Activated CD4-positive, alpha-beta T cell treated with anti-CD3 and anti-CD28 coated beads for 36 hours (primary cell): ENCODE measurements at regions of chr5 and their contacts with region 1.

Region 1: GRCh38 chr5:112174959-112175594 is 244.0 kb downstream of the EPB41L4A start:
- DNase-seq: peak; percentile 58
- ATAC-seq: peak; percentile 84
- H3K4me3 Mint-ChIP-seq: no peak overlapping the region
- H3K27ac Mint-ChIP-seq: no peak overlapping the region
- H3K4me1 Mint-ChIP-seq: peaks cover 1% of the 10 kb centered on the region
- H3K27me3 Mint-ChIP-seq: peaks cover 6% of the 10 kb centered on the region

Region 2: GRCh38 chr5:112419986-112420864 is 245.1 kb after region 1 on chr5:
- CTCF ChIA-PET with region 1: interaction called, 14 read pairs
- POLR2A ChIA-PET with region 1: no interaction called
- intact Hi-C with region 1: loop called (anchors 1 kb)
- DNase-seq: peak; percentile 71
- ATAC-seq: peak; percentile 68
- H3K4me3 Mint-ChIP-seq: peak overlapping the region; percentile 63
- H3K27ac Mint-ChIP-seq: no peak overlapping the region
- H3K4me1 Mint-ChIP-seq: peaks cover 10% of the 10 kb centered on the region
- H3K27me3 Mint-ChIP-seq: peaks cover 45% of the 10 kb centered on the region

Region 3: GRCh38 chr5:112492291-112492690 is 317.2 kb after region 1 on chr5:
- CTCF ChIA-PET with region 1: interaction called, 3 read pairs
- POLR2A ChIA-PET with region 1: no interaction called
- intact Hi-C with region 1: loop called (anchors 5 kb)
- DNase-seq: peak; percentile 59
- ATAC-seq: peak; percentile 88
- H3K4me3 Mint-ChIP-seq: no peak overlapping the region
- H3K27ac Mint-ChIP-seq: no peak overlapping the region
- H3K4me1 Mint-ChIP-seq: no peaks in the 10 kb centered on the region
- H3K27me3 Mint-ChIP-seq: peaks cover 33% of the 10 kb centered on the region

Region 4: DNA sequence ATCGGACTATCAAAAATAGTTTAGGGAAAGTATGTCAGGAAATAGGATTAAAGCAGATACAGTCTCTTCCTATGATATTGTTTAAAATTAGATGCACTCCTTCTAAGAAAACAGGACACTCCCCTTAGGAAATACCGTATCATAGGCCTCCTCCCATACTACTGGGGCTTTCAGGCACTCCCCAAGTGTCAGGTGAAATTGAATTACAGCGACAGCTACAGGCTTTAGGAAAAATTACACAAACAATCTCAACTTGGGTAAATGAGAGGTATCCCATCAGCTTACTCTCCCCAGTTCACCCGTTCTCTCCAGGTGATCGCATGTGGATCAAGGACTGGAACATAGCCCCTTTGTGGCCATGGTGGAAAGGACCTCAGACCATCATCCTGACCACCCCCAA is 354.4 kb after region 1 on chr5:
- CTCF ChIA-PET with region 1: no interaction called
- POLR2A ChIA-PET with region 1: no interaction called
- intact Hi-C with region 1: loop called in 1 of 2 experiments (anchors 1 kb)
- DNase-seq: no peak
- ATAC-seq: no peak
- H3K4me3 Mint-ChIP-seq: no peak overlapping the region
- H3K27ac Mint-ChIP-seq: no peak overlapping the region
- H3K4me1 Mint-ChIP-seq: no peaks in the 10 kb centered on the region
- H3K27me3 Mint-ChIP-seq: peaks cover 7% of the 10 kb centered on the region

Region 5: DNA sequence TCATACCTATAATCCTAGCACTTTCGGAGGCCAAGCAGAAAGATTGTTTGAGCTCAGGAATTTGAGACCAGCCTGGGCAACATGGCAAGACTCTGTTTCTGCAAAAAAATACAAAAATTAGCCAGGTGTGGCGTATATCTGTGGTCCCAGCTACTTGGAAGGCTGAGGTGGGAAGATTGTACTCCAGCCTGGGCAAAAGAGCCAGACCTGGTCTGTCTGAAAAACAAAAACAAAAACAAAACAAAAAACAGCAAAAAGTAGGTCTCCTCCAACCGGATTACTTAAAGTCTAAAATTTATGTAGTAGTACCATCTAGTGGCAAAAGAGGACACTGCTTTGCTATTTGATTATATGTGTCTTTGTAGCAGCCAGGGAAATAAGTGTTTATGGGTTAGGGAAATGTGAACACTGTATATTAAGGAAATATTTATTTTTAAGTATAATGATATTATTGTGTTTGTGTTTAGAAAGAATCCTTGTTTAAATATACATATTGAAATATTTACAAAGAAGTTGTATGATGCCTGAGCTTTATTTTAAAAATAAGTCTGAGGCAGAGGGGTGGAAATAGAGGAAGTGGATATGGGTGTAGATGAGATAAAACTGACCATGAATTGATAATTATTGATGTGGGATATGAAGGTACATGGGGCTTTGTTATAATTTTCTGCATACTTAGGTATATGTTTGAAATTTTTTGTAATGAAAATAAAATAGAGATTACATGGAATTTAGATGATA is 582.6 kb after region 1 on chr5:
- CTCF ChIA-PET with region 1: interaction called, 5 read pairs
- POLR2A ChIA-PET with region 1: no interaction called
- intact Hi-C with region 1: loop called (anchors 2 to 10 kb)
- DNase-seq: no peak
- ATAC-seq: peak; percentile 74
- H3K4me3 Mint-ChIP-seq: no peak overlapping the region
- H3K27ac Mint-ChIP-seq: peak overlapping the region; percentile 51
- H3K4me1 Mint-ChIP-seq: peaks cover 2% of the 10 kb centered on the region
- H3K27me3 Mint-ChIP-seq: no peaks in the 10 kb centered on the region